Left ventricle myocardium superior (tissue), 1 donor: ENCODE measurements at regions of chr4 and their contacts with region 1.

Region 1: GRCh38 chr4:159206427-159206871 is 103.6 kb downstream of the RAPGEF2 start:
- DNase-seq: no peak
- ATAC-seq: no peak

Region 2: GRCh38 chr4:158314756-158315487 is 891.5 kb before region 1 on chr4:
- intact Hi-C with region 1: no loop called
- DNase-seq: no peak
- ATAC-seq: peak; percentile 89

Region 3: DNA sequence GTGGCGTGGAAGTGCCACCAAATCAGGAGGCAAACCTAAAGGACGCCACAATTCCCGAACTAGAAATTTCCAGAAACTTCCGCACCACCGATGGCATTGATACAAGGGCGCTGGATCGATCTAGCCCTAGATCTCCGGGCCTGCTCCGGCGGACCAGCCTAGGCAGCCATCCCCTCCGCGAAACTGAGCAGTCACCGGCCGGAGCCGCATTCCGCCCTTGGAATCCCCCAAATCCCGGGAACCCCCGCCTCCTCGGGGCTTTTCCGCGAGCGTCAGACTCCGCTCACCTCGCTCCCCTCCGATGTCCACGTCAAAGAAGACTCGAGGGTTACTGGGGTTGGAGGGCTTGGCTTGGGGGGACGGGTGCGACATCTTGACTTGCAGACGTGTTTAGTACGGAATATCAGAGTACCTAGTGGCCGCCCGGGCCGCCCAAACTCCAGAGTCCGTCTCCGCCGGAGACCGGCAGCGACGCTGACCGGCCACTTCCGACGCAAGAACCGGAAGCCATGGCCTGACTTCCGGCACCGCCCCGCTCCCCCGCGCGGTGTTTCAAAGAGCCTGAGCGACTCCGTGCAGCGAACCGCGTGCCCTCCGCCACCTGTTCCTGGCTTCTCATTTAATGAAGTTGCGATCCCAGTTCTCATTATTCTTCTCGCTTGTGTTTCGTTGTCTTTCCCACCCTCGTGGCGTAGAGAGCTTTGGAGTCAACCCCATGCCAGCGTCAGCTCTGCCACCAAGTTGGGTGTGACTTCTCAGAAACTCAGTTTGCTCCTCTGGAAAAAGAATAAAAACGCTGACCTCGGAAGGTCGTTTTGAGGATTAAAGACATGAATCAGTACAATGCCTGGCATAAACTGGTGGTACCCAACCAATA is 483.3 kb before region 1 on chr4 and contains the start of gene PPID:
- intact Hi-C with region 1: loop called (anchors 10 kb)
- DNase-seq: peak; percentile 90
- ATAC-seq: peak; percentile 99
- total RNA-seq, gene PPID: 38.2 TPM

Region 4: GRCh38 chr4:159086611-159087010 is 119.8 kb before region 1 on chr4:
- intact Hi-C with region 1: no loop called
- DNase-seq: no peak
- ATAC-seq: no peak

Region 5: GRCh38 chr4:159577241-159577640 is 370.8 kb after region 1 on chr4:
- intact Hi-C with region 1: no loop called
- DNase-seq: no peak
- ATAC-seq: no peak